Ascending aorta (tissue), 2 donors: ENCODE measurements at regions of chr1 and their contacts with region 1.

Region 1: DNA sequence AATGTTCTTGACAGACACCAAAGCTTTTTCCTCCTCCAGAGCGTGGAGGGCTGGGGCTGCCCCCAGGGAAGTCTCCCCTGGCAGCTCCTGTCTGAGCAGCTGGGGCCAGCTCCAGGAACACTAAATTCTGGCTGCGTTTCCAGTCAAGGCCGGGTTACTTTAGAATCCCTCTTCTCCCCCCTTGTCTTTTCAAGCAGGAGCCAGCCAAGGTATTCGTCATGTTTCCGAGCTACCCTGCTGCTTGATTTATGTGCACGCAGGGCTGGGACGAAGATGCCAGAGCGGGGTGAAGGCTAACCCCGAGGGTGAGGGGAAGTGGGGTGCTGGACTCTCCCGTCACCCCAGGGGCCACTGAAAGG is 68.1 kb upstream of the ANGPTL1 start:
- DNase-seq: peak; percentile 33 to 93
- H3K4me3 ChIP-seq: peak overlapping the region; percentile 40 to 50
- H3K27ac ChIP-seq: peak overlapping the region; percentile 89 to 93
- H3K4me1 ChIP-seq: peaks cover 25 to 48% of the 10 kb centered on the region in 2 donors
- H3K27me3 ChIP-seq: no peaks in the 10 kb centered on the region
- CTCF ChIP-seq: no peak

Region 2: DNA sequence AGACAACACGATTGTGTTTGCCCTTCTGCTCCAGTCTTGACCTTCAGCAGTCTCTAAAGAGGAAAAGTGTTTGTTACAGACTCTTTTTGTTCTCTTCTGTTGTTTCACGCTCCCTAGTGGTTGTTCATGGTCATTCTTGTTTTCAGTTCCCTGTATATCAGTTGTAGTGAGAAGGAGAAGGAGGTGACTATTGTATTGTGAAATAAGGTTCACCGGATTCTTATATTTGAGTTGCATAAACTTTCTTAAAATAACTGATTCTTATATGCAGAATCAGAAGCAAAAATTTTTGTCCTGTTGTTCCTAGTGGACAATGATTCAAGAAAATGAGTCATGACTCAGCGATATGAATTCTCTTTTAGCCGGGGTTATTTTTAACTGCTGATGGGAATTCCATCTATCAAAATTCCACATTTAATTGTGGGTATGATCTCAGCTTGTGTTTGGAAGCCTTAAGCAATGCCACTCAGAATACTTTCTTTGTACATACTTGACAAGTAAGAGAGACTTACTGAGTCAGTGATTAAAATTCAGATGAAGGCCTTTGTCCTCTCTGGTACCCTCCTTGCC is 594.3 kb before region 1 on chr1:
- intact Hi-C with region 1: loop called (anchors 5 kb)
- DNase-seq: no peak
- H3K4me3 ChIP-seq: peak overlapping the region; percentile 9 to 23
- H3K27ac ChIP-seq: peak overlapping the region; percentile 71 to 73
- H3K4me1 ChIP-seq: peaks cover 5 to 37% of the 10 kb centered on the region in 2 donors
- H3K27me3 ChIP-seq: no peaks in the 10 kb centered on the region
- CTCF ChIP-seq: peak; percentile 35 to 57 (median 45)

Region 3: GRCh38 chr1:178869119-178869697 is 69.7 kb before region 1 on chr1:
- intact Hi-C with region 1: loop called (anchors 2 kb)
- DNase-seq: no peak
- H3K4me3 ChIP-seq: peak overlapping the region; percentile 41 to 60
- H3K27ac ChIP-seq: peak overlapping the region in 1 of 2 donors; percentile 53
- H3K4me1 ChIP-seq: peaks cover 0 to 2% of the 10 kb centered on the region in 2 donors
- H3K27me3 ChIP-seq: no peaks in the 10 kb centered on the region
- CTCF ChIP-seq: no peak

Region 4: GRCh38 chr1:178962853-178963711 is 24.1 kb after region 1 on chr1:
- intact Hi-C with region 1: loop called (anchors 2 kb)
- DNase-seq: no peak
- H3K4me3 ChIP-seq: no peak overlapping the region
- H3K27ac ChIP-seq: peak overlapping the region; percentile 55 to 73
- H3K4me1 ChIP-seq: peaks cover 0 to 4% of the 10 kb centered on the region in 2 donors
- H3K27me3 ChIP-seq: no peaks in the 10 kb centered on the region
- CTCF ChIP-seq: no peak

Region 5: DNA sequence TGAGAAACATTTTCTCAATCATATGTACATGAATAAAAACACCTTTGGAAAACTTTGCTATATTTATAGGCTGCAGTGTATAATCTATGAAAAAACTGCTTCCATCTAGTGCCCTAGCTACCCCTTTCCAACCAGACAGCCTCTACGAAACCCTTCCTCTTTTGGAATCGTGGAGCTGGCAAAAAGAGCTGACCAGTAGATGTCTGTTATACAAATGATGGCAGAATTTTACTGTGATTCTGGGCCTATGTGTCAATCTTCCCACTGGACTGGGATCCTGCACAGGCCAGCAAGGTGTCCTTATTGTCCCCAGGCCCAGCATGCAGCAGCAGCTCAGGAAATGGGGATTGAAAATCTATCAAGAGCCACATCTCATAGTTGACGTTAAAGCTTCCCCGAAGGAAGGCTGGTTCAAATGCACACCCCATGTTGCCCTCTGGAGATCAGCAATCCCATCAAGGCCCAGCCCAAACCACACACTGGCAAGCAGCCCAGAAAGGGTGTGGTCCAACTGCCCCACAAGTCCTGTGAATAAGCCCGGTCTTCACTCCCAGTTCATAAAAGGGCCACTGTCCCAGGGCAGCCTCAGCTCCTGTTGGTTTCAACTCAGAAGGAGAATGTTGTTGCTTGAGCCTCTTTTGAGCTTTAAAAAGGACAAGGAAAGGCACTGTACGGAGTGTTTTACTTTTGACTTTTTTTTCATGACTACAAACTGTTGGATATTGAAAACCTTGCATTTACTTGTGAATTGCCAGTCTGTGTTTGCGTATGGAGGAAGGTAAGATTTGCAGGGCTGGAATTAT is 78.0 kb after region 1 on chr1:
- intact Hi-C with region 1: no loop called
- DNase-seq: peak; percentile 55 to 83
- H3K4me3 ChIP-seq: no peak overlapping the region
- H3K27ac ChIP-seq: peak overlapping the region; percentile 5 to 30
- H3K4me1 ChIP-seq: peaks cover 3 to 6% of the 10 kb centered on the region in 2 donors
- H3K27me3 ChIP-seq: no peaks in the 10 kb centered on the region
- CTCF ChIP-seq: no peak